IMR-90 (cell line): ENCODE measurements at regions of chr3 and their contacts with region 1.

Region 1: DNA sequence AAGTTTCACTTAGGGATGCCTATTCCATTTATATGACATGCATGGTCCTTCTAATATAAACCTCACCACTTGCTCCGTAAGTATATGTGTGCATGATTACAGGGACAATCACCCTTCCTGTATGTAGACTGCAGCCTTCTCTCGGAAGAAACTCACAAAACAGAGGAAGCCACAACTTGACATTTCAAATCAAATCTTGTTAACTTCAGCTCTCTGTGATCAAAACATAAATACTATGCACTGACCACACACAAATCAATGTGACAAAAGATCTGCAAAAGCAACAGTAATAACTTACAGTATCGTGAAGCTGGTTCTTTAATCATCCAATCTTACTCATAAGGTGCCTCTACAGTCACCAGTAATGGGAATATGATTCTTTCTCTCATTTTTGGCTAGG is 50.2 kb downstream of the FHIT start:
- DNase-seq: no peak
- ATAC-seq: no peak
- H3K4me3 ChIP-seq: no peak overlapping the region
- H3K27ac ChIP-seq: no peak overlapping the region
- H3K4me1 ChIP-seq: no peaks in the 10 kb centered on the region
- H3K27me3 ChIP-seq: no peaks in the 10 kb centered on the region
- CTCF ChIP-seq: no peak
- POLR2A ChIP-seq: no peak
- RAD21 ChIP-seq: no peak

Region 2: DNA sequence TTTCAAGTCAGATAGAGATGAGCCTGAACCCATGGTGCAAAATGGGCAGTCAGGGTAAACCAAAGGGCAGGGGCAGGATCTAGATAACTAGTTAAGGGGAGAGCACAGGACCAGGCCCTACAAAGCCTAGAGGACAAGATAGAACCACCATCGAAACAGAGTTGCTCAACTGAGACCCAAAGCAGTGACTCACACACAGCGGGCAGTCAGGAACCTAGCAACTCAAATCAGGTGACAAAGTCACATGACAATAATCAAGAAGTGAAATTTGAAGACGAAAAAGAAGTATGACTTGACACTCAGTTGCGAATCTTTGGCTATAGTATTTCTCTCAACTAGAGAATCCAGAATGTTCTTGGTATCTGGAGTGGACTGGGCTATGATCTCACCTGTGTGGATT is 224.3 kb after region 1 on chr3:
- CTCF ChIA-PET with region 1: interaction called, 10 read pairs
- POLR2A ChIA-PET with region 1: no interaction called
- dilution Hi-C with region 1: no loop called
- in situ Hi-C with region 1: no loop called
- intact Hi-C with region 1: no loop called
- DNase-seq: no peak
- ATAC-seq: no peak
- H3K4me3 ChIP-seq: no peak overlapping the region
- H3K27ac ChIP-seq: no peak overlapping the region
- H3K4me1 ChIP-seq: no peaks in the 10 kb centered on the region
- H3K27me3 ChIP-seq: no peaks in the 10 kb centered on the region
- CTCF ChIP-seq: no peak
- POLR2A ChIP-seq: no peak
- RAD21 ChIP-seq: no peak